ENCODE measurements at regions of chr1 and their contacts with region 1.

Region 1: GRCh38 chr1:45359882-45360513 is 19.8 kb upstream of the MUTYH start:
- DNase-seq: peak; percentile 68 to 87 (median 81)
- H3K4me3 ChIP-seq: peak overlapping the region in 2 of 7 experiments; percentile 7 to 66
- H3K27ac ChIP-seq: no peak overlapping the region
- H3K4me1 ChIP-seq: peaks cover 2 to 25% (median 5%) of the 10 kb centered on the region in 4 experiments
- H3K27me3 ChIP-seq: no peaks in the 10 kb centered on the region

Region 2: DNA sequence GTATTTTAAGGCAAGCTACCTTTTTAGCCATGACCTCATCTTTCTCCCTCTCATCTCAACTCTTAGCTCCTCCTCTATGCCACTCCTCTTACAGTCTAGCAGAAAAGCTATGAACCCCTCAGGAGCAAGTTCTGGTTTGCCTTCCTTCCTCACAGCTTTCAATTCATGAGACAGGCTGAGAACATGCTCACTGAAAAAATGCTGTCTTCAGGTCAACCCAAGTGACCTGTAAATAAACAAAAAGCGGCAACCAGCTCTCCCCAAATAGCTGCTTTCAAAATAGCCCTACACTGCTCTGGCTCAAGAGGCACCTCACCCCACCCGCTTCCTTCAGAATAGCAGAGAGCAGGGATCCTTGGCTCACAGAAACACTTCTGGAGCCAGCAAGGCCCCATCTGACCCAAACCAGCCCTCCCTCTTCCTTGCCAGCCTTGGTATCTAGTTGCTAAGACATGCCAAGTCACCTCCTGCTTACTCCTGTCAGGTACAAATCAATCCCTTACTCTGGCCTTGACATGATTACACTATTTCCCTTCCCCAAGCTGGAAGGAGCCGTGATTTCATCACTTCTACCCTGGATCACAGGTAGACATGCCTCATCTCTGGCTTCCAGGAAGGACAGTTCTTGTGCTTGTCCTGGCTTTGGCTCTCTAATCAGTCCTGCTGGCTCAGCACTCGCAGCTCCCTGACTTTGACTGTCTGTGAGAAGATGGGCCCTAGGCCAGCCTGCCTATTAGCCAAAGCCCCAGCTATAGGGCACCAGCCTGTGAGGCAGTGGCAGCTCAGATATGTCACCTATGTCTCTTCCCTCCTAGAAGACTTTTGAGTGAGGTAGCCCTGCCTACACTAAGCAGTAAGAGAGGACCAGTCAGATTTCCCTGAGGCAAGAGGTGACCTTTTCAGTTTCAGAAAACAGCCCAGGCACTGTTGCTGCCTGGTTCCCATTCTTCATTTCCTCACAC is 11.0 kb before region 1 on chr1:
- CTCF ChIA-PET with region 1: interaction called, 46 read pairs
- POLR2A ChIA-PET with region 1: no interaction called
- DNase-seq: no peak
- H3K4me3 ChIP-seq: no peak overlapping the region
- H3K27ac ChIP-seq: no peak overlapping the region
- H3K4me1 ChIP-seq: peaks cover 0 to 15% (median 1%) of the 10 kb centered on the region in 4 experiments
- H3K27me3 ChIP-seq: no peaks in the 10 kb centered on the region

Region 3: DNA sequence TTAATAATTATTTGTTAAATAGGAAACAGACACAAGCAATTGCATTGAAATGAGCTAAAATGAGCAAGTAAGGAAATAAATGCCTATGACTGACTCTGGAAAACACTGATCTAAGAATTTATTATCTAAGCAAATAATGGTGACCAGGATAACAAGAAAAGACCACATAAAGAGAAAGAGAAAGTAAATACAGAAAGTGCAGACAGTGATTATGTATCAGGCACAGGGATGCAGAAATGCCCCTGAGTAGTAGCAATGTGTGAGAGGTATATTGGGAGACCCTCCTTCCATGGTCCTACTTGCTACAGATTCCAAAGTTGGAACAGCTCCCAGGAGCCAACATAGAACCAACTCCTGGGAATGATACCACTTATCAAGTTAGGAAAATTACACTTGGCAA is 13.6 kb after region 1 on chr1:
- CTCF ChIA-PET with region 1: interaction called, 15 read pairs
- POLR2A ChIA-PET with region 1: no interaction called
- DNase-seq: peak in 1 of 3 donors; percentile 24
- H3K4me3 ChIP-seq: peak overlapping the region in 1 of 7 experiments; percentile 53
- H3K27ac ChIP-seq: no peak overlapping the region
- H3K4me1 ChIP-seq: peaks cover 0 to 3% (median under 1%) of the 10 kb centered on the region in 4 experiments
- H3K27me3 ChIP-seq: no peaks in the 10 kb centered on the region

Measured in common myeloid progenitor, CD34-positive (primary cell).